ENCODE measurements at regions of chr11 and their contacts with region 1.

Region 1: GRCh38 chr11:34357701-34358257 is at the start of gene ABTB2:
- DNase-seq: peak; percentile 98 to 99 (median 98)
- ATAC-seq: peak; percentile 93 to 96 (median 95)
- H3K4me3 ChIP-seq: peak within 1 kb of the TSS; percentile 42 to 84 (median 64)
- H3K27ac ChIP-seq: peak within 1 kb of the TSS; percentile 62 to 89 (median 79)
- H3K4me1 ChIP-seq: peaks cover 0 to 44% (median 30%) of the 10 kb centered on the region in 12 donors
- H3K27me3 ChIP-seq: peaks cover 0 to 22% (median 6%) of the 10 kb centered on the region in 9 donors
- CTCF ChIP-seq: no peak
- POLR2A ChIP-seq: peak; percentile 76 to 99
- total RNA-seq, gene ABTB2: 9.0 to 26.3 (median 12.5) TPM

Region 2: GRCh38 chr11:33996498-33997454 is 361.0 kb before region 1 on chr11:
- intact Hi-C with region 1: loop called (anchors 1 to 5 kb)
- DNase-seq: peak in 4 of 5 donors; percentile 44 to 69 (median 60)
- ATAC-seq: peak; percentile 82 to 98 (median 95)
- H3K4me3 ChIP-seq: no peak overlapping the region
- H3K27ac ChIP-seq: no peak overlapping the region
- H3K4me1 ChIP-seq: peaks cover 0 to 4% (median 0%) of the 10 kb centered on the region in 12 donors
- H3K27me3 ChIP-seq: peaks cover 0 to 14% (median 2%) of the 10 kb centered on the region in 9 donors
- CTCF ChIP-seq: peak; percentile 72 to 87 (median 80)
- POLR2A ChIP-seq: no peak

Region 3: GRCh38 chr11:34105079-34105956 is 252.5 kb before region 1 on chr11 and contains the start of gene NAT10:
- intact Hi-C with region 1: loop called in 2 of 10 experiments (anchors 5 kb)
- DNase-seq: peak; percentile 96 to 98 (median 97)
- ATAC-seq: peak; percentile 96 to 99 (median 98)
- H3K4me3 ChIP-seq: peak within 1 kb of the TSS; percentile 69 to 98 (median 88)
- H3K27ac ChIP-seq: peak within 1 kb of the TSS; percentile 83 to 97 (median 92)
- H3K4me1 ChIP-seq: peaks cover 0 to 25% (median 14%) of the 10 kb centered on the region in 12 donors
- H3K27me3 ChIP-seq: no peaks in the 10 kb centered on the region
- CTCF ChIP-seq: peak in 4 of 12 donors; percentile 6 to 23 (median 15)
- POLR2A ChIP-seq: peak in 1 of 2 donors; percentile 84
- total RNA-seq, gene NAT10: 14.5 to 27.1 (median 21.2) TPM

Region 4: DNA sequence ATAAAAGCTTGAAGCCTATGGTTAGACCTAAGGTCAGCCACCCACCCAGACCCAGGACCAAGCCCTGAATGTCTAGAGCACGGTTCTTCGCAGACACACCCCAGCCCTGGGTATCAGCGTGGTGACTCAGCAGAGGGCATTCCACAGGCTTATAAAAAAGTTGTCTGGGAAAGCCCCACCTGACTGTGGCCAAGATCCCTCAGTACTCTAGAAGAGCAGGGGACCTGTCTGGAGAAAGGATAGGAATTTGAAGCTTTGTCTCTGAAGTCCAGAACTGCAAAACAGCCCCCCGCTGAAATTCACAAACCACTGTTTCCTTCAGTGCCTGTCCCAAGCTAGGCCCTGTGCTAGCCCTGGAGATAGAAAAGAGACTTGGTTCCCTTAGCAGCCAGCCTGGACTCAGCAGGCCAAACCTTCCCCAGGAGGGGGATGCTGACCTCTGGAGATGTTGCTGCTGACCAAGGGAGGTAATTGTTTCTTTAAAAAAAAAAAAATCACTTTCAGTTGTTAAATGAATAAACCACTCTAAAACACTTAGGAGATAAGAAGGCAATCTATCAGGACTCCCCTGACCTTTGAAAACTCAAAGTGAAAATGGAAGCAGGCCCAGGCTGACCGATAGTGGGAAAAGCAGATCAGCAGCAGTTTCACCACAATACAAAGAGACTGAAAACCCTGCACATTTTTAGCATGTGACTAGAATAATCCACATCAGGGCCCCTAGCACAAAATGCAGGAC is 113.9 kb before region 1 on chr11:
- intact Hi-C with region 1: loop called in 2 of 10 experiments (anchors 5 to 10 kb)
- DNase-seq: peak in 1 of 5 donors; percentile 40
- ATAC-seq: peak in 3 of 4 donors; percentile 41 to 65 (median 48)
- H3K4me3 ChIP-seq: no peak overlapping the region
- H3K27ac ChIP-seq: peak overlapping the region in 4 of 12 donors; percentile 22 to 57 (median 45)
- H3K4me1 ChIP-seq: peaks cover 0 to 43% (median 22%) of the 10 kb centered on the region in 12 donors
- H3K27me3 ChIP-seq: no peaks in the 10 kb centered on the region
- CTCF ChIP-seq: no peak
- POLR2A ChIP-seq: no peak

Region 5: DNA sequence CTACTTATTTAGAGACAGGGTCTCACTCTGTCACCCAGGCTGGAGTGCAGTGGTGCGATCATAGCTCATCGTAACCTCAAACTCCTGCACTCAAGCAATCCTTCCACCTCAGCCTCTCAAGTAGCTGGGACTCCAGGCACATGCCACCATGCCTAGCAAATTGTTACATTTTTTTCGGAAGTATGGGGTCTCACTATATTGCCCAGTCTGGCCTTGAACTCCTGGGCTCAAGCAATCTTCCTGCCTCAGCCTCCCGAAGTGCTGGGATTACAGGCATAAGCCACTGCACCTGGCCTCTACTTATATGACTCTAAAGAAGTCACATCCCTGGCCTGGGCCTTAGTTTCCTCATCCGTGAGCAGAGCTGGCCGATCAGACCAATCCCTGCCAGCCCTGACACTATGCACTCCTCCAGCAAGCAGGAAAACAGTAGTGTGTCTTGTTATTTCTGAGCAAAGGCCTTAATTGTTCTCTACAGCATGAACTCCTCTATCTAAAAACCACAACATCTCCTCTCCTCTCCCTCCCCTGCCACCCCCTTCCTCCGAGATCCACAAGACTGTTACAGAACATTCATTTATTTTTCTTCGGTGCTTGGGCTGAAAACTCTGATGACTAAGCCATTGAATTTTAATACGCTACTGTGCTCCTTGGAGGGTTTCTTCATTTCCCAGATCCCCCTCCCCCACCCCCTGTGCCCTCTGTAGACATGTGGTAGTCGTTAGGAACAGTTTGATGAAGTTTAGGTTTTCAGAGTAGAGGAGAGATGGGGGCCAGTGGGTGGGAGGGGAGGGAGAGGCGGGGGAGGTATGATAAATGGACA is 91.5 kb before region 1 on chr11:
- intact Hi-C with region 1: loop called in 3 of 10 experiments (anchors 5 to 10 kb)
- DNase-seq: peak in 3 of 5 donors; percentile 45 to 53 (median 52)
- ATAC-seq: peak; percentile 24 to 75 (median 66)
- H3K4me3 ChIP-seq: no peak overlapping the region
- H3K27ac ChIP-seq: peak overlapping the region in 7 of 12 donors; percentile 33 to 60 (median 49)
- H3K4me1 ChIP-seq: peaks cover 0 to 59% (median 29%) of the 10 kb centered on the region in 12 donors
- H3K27me3 ChIP-seq: peaks cover 0 to 4% (median 0%) of the 10 kb centered on the region in 9 donors
- CTCF ChIP-seq: no peak
- POLR2A ChIP-seq: no peak

Region 6: GRCh38 chr11:34492806-34493414 is 135.1 kb after region 1 on chr11:
- intact Hi-C with region 1: loop called in 5 of 10 experiments (anchors 2 to 10 kb)
- DNase-seq: peak in 3 of 5 donors; percentile 16 to 62 (median 31)
- ATAC-seq: peak in 1 of 4 donors; percentile 36
- H3K4me3 ChIP-seq: no peak overlapping the region
- H3K27ac ChIP-seq: no peak overlapping the region
- H3K4me1 ChIP-seq: no peaks in the 10 kb centered on the region
- H3K27me3 ChIP-seq: peaks cover 0 to 3% (median 0%) of the 10 kb centered on the region in 9 donors
- CTCF ChIP-seq: peak; percentile 44 to 80 (median 69)
- POLR2A ChIP-seq: no peak

Measured in heart left ventricle (tissue), 16 donors.